ENCODE measurements at regions of chr6 and their contacts with region 1.

Region 1: GRCh38 chr6:146543211-146543939 is at the start of gene RAB32:
- DNase-seq: peak; percentile 82 to 97
- H3K4me3 ChIP-seq: peak within 1 kb of the TSS; percentile 91 to 94
- H3K27ac ChIP-seq: peak within 1 kb of the TSS; percentile 97 to 99
- H3K4me1 ChIP-seq: peaks cover 4 to 27% of the 10 kb centered on the region in 2 donors
- H3K27me3 ChIP-seq: no peaks in the 10 kb centered on the region
- CTCF ChIP-seq: peak; percentile 79 to 85 (median 79)
- total RNA-seq, gene RAB32: 89.2 TPM

Region 2: GRCh38 chr6:145963216-145964068 is 579.9 kb before region 1 on chr6:
- intact Hi-C with region 1: loop called (anchors 5 kb)
- DNase-seq: peak in 1 of 2 donors; percentile 69
- H3K4me3 ChIP-seq: peak overlapping the region; percentile 82 to 92
- H3K27ac ChIP-seq: peak overlapping the region; percentile 84 to 86
- H3K4me1 ChIP-seq: peaks cover 0 to 16% of the 10 kb centered on the region in 2 donors
- H3K27me3 ChIP-seq: no peaks in the 10 kb centered on the region
- CTCF ChIP-seq: no peak

Region 3: GRCh38 chr6:146153040-146153758 is 390.2 kb before region 1 on chr6:
- intact Hi-C with region 1: no loop called
- DNase-seq: no peak
- H3K4me3 ChIP-seq: no peak overlapping the region
- H3K27ac ChIP-seq: no peak overlapping the region
- H3K4me1 ChIP-seq: no peaks in the 10 kb centered on the region
- H3K27me3 ChIP-seq: no peaks in the 10 kb centered on the region
- CTCF ChIP-seq: no peak

Region 4: DNA sequence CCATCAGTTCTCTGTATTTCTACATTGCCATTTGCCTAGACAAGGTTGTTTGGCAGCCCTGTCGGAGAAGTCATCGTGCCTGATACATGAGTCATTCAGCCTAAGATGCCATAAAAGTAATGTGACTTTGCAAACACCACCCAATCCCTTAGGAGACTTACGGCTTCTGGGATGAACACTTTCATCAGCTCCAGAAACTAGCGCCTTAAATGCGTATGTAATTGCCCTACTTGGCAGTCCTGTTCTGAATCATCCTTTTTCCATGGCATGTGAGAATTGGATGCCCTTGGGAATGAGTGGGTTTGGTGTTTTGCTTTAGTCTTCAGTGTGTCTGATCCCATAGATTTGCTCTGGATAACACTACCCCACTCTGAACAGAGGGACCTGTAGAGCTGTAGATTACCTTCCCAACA is 1957.8 kb after region 1 on chr6:
- intact Hi-C with region 1: loop called (anchors 10 kb)
- DNase-seq: peak in 1 of 2 donors; percentile 89
- H3K4me3 ChIP-seq: peak overlapping the region in 1 of 2 donors; percentile 33
- H3K27ac ChIP-seq: peak overlapping the region; percentile 87 to 88
- H3K4me1 ChIP-seq: peaks cover 0 to 37% of the 10 kb centered on the region in 2 donors
- H3K27me3 ChIP-seq: no peaks in the 10 kb centered on the region
- CTCF ChIP-seq: no peak

Measured in ascending aorta (tissue), 2 donors.